ENCODE measurements at regions of chr4 and their contacts with region 1.

Region 1: GRCh38 chr4:94406668-94407437 is 44.9 kb upstream of the PDLIM5 start:
- H3K4me3 ChIP-seq: no peak overlapping the region
- H3K27ac ChIP-seq: no peak overlapping the region
- H3K4me1 ChIP-seq: no peaks in the 10 kb centered on the region
- CTCF ChIP-seq: peak; percentile 62; the same call in 1 of the 2 replicates

Region 2: DNA sequence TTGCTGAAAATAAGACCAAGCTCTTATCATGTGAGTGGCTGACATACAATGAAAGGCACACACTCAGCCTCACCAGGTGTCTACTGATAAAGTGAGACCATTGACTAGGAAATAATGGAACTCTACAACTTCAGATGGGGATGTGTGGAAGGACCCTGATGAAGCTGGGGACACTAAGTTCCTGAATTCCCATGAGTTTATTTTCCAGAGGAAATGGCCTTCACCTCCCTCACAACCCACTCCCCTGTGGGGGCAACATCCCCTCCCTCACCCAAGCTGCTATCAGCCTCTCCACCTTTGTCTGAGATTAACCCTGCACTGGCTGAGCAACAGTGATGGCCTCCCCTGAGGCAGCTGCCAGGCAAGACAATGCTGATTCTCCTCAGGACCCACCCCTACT is 254.4 kb before region 1 on chr4:
- CTCF ChIA-PET with region 1: no interaction called
- POLR2A ChIA-PET with region 1: no interaction called
- H3K4me3 ChIP-seq: no peak overlapping the region
- H3K27ac ChIP-seq: no peak overlapping the region
- H3K4me1 ChIP-seq: no peaks in the 10 kb centered on the region
- CTCF ChIP-seq: no peak

Region 3: GRCh38 chr4:94332983-94333590 is 73.8 kb before region 1 on chr4:
- CTCF ChIA-PET with region 1: interaction called, 11 read pairs
- POLR2A ChIA-PET with region 1: no interaction called
- H3K4me3 ChIP-seq: no peak overlapping the region
- H3K27ac ChIP-seq: no peak overlapping the region
- H3K4me1 ChIP-seq: no peaks in the 10 kb centered on the region
- CTCF ChIP-seq: no peak

Region 4: DNA sequence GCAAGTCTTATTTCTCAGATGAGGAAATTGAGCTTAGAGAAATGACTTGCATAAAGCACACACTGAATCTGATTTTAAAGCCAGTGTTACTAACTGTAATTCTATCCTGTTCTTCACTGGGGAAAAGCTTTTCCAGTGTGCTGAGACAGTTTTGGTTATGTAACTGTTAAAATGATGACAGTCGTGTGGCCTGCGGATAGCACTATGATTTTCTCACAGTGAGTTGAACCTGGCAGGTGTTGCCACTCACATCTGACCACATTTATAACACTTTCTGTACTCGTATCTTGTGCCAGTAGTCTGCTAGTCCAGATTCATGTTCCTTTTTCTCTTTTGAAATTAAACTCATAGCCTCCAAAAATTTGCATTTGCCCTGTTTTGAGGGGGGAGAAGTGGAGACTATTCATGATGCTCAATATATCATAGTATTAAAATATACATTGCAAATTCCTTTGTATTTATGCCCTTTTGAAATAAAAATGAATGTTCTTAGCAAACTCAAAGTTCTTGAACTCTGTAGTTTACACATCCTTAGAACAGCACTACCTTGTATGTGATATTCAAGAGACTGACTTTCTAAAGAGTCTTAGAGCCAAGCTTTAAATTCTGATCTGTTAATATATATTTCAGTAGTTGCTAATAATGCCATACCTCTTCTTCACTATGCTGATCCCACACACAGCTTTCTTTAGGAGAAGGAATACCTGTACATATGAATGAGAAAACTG is 177.2 kb after region 1 on chr4:
- CTCF ChIA-PET with region 1: interaction called, 13 read pairs
- POLR2A ChIA-PET with region 1: no interaction called
- H3K4me3 ChIP-seq: no peak overlapping the region
- H3K27ac ChIP-seq: no peak overlapping the region
- H3K4me1 ChIP-seq: no peaks in the 10 kb centered on the region
- CTCF ChIP-seq: no peak

Region 5: GRCh38 chr4:94621491-94622080 is 214.7 kb after region 1 on chr4:
- CTCF ChIA-PET with region 1: interaction called, 12 read pairs
- POLR2A ChIA-PET with region 1: no interaction called
- H3K4me3 ChIP-seq: no peak overlapping the region
- H3K27ac ChIP-seq: no peak overlapping the region
- H3K4me1 ChIP-seq: no peaks in the 10 kb centered on the region
- CTCF ChIP-seq: no peak

Measured in HEK293 (cell line).